Body of pancreas (tissue), 4 donors: ENCODE measurements at regions of chr1 and their contacts with region 1.

Region 1: GRCh38 chr1:47710329-47711071 is 272.7 kb downstream of the FOXD2 start:
- DNase-seq: peak; percentile 69 to 84 (median 78)
- ATAC-seq: peak; percentile 80
- H3K4me3 ChIP-seq: no peak overlapping the region
- H3K27ac ChIP-seq: no peak overlapping the region
- H3K4me1 ChIP-seq: peaks cover 22% of the 10 kb centered on the region
- H3K27me3 ChIP-seq: peaks cover 0 to 30% of the 10 kb centered on the region in 2 donors
- CTCF ChIP-seq: peak; percentile 89 to 98 (median 94)
- POLR2A ChIP-seq: no peak

Region 2: GRCh38 chr1:47351305-47351704 is 359.2 kb before region 1 on chr1:
- intact Hi-C with region 1: no loop called
- DNase-seq: no peak
- ATAC-seq: no peak
- H3K4me3 ChIP-seq: no peak overlapping the region
- H3K27ac ChIP-seq: no peak overlapping the region
- H3K4me1 ChIP-seq: peaks cover 12% of the 10 kb centered on the region
- H3K27me3 ChIP-seq: no peaks in the 10 kb centered on the region
- CTCF ChIP-seq: no peak
- POLR2A ChIP-seq: no peak

Region 3: DNA sequence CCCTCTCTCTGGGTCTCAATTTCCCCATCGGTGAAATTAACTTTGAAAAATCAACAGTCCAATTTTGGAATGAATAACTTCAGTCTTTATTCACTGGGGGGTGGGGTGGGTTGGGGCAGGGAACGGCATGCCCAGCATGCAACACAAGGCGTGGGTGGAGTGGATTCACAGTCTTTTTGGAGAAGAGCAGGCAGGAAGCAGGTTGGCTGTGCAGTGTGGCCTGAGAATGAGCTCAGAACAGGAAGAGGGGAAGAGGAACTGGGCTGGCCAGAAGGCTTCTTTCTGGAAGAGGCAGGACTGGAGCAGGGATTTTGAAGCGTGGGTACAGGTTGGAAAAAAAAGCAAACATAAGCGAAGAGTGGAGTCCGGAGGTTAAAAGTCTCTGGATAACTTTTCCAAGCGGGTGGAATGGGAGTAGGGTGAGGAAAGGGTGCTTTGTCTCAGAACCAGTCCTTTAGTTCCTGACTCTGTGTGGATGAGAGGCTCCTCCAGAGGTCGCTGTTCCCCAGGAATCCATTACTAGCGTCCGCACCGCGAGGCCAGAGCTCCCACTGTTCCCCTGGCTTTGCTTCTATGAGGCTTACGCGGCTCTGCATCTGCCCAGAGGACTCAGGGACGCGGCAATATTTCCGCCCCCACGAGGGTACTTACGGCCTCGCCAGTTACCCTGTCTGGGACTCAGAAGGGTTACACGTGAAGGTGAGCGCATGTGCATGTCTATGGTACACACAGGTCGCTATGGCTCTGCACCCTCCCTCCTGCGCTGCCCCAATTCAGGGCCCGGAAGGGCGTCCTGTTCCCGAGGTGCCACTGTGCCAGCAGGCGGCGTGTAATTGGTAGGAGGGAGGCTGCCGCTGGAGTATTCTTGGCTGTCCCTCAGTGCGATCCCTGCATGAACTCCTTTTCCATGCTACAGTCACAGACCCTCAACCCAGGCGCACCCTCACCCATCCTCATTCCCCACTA is 278.1 kb before region 1 on chr1:
- intact Hi-C with region 1: loop called (anchors 5 kb)
- DNase-seq: peak; percentile 83 to 88 (median 84)
- ATAC-seq: peak; percentile 68
- H3K4me3 ChIP-seq: no peak overlapping the region
- H3K27ac ChIP-seq: no peak overlapping the region
- H3K4me1 ChIP-seq: peaks cover 44% of the 10 kb centered on the region
- H3K27me3 ChIP-seq: peaks cover 0 to 39% of the 10 kb centered on the region in 2 donors
- CTCF ChIP-seq: peak; percentile 42 to 85 (median 79)
- POLR2A ChIP-seq: no peak

Region 4: GRCh38 chr1:47532921-47533792 is 177.3 kb before region 1 on chr1:
- intact Hi-C with region 1: loop called (anchors 10 kb)
- DNase-seq: peak; percentile 20 to 34 (median 26)
- ATAC-seq: peak; percentile 74
- H3K4me3 ChIP-seq: no peak overlapping the region
- H3K27ac ChIP-seq: no peak overlapping the region
- H3K4me1 ChIP-seq: no peaks in the 10 kb centered on the region
- H3K27me3 ChIP-seq: no peaks in the 10 kb centered on the region
- CTCF ChIP-seq: no peak
- POLR2A ChIP-seq: no peak

Region 5: DNA sequence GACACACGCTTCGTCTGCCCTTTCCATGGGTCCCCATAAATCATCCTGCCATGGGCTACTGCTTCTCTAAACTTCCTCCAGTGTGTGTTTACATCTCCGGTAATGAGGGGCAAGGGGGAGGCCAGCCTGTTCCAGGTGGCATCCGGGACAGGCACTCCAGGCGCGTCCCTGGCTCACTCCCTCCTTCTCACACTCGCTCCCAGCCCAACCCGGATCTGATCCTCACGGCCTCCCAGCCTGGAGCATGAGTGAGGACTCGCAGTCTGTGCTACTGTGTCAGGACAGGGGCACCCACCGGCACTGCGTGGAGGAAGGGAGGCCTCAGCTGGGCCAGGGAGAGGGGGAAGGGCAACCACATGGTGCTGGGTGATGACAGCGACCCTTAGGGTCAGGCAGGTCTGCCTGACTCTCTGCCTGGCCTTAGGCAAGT is 61.3 kb after region 1 on chr1:
- intact Hi-C with region 1: no loop called
- DNase-seq: no peak
- ATAC-seq: no peak
- H3K4me3 ChIP-seq: no peak overlapping the region
- H3K27ac ChIP-seq: peak overlapping the region in 1 of 4 donors; percentile 20
- H3K4me1 ChIP-seq: peaks cover 19% of the 10 kb centered on the region
- H3K27me3 ChIP-seq: no peaks in the 10 kb centered on the region
- CTCF ChIP-seq: no peak
- POLR2A ChIP-seq: no peak